Activated CD4-positive, alpha-beta T cell treated with anti-CD3 and anti-CD28 coated beads for 36 hours (primary cell): ENCODE measurements at regions of chr4 and their contacts with region 1.

Region 1: GRCh38 chr4:181528570-181529184 is 714.5 kb upstream of the TENM3 start:
- DNase-seq: peak; percentile 53
- ATAC-seq: no peak
- H3K4me3 Mint-ChIP-seq: no peak overlapping the region
- H3K27ac Mint-ChIP-seq: no peak overlapping the region
- H3K4me1 Mint-ChIP-seq: no peaks in the 10 kb centered on the region
- H3K27me3 Mint-ChIP-seq: no peaks in the 10 kb centered on the region

Region 2: GRCh38 chr4:180828440-180829018 is 700.1 kb before region 1 on chr4:
- CTCF ChIA-PET with region 1: no interaction called
- POLR2A ChIA-PET with region 1: no interaction called
- intact Hi-C with region 1: loop called in 1 of 2 experiments (anchors 10 kb)
- DNase-seq: peak; percentile 14
- ATAC-seq: no peak
- H3K4me3 Mint-ChIP-seq: no peak overlapping the region
- H3K27ac Mint-ChIP-seq: no peak overlapping the region
- H3K4me1 Mint-ChIP-seq: no peaks in the 10 kb centered on the region
- H3K27me3 Mint-ChIP-seq: no peaks in the 10 kb centered on the region

Region 3: GRCh38 chr4:181143250-181143854 is 385.3 kb before region 1 on chr4:
- CTCF ChIA-PET with region 1: interaction called, 6 read pairs
- POLR2A ChIA-PET with region 1: no interaction called
- intact Hi-C with region 1: loop called (anchors 1 kb)
- DNase-seq: peak; percentile 84
- ATAC-seq: peak; percentile 60
- H3K4me3 Mint-ChIP-seq: no peak overlapping the region
- H3K27ac Mint-ChIP-seq: no peak overlapping the region
- H3K4me1 Mint-ChIP-seq: no peaks in the 10 kb centered on the region
- H3K27me3 Mint-ChIP-seq: peaks cover 5% of the 10 kb centered on the region

Region 4: GRCh38 chr4:181301735-181302710 is 226.7 kb before region 1 on chr4:
- CTCF ChIA-PET with region 1: interaction called, 3 read pairs
- POLR2A ChIA-PET with region 1: no interaction called
- intact Hi-C with region 1: loop called (anchors 1 to 5 kb)
- DNase-seq: peak; percentile 59
- ATAC-seq: no peak
- H3K4me3 Mint-ChIP-seq: no peak overlapping the region
- H3K27ac Mint-ChIP-seq: no peak overlapping the region
- H3K4me1 Mint-ChIP-seq: no peaks in the 10 kb centered on the region
- H3K27me3 Mint-ChIP-seq: no peaks in the 10 kb centered on the region

Region 5: DNA sequence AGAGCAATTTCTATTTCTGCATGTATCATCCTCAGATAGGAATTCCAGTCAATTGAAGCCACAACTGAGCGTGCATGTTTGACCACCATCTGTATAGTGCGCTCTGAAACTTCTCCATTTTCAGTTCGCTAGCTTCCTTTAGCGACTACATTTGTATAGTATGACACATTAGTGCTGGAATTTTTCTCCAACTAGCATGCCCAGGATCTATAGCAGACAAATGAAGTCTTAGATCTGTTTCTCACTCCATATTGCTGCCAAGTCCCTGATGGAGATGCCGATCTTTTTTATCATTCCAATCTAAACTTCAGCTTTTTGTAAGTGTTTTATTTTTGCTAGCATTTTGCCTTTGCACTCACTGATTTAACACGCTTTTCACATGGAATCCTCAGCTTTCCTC is 60.2 kb before region 1 on chr4:
- CTCF ChIA-PET with region 1: no interaction called
- POLR2A ChIA-PET with region 1: no interaction called
- intact Hi-C with region 1: no loop called
- DNase-seq: no peak
- ATAC-seq: no peak
- H3K4me3 Mint-ChIP-seq: no peak overlapping the region
- H3K27ac Mint-ChIP-seq: no peak overlapping the region
- H3K4me1 Mint-ChIP-seq: no peaks in the 10 kb centered on the region
- H3K27me3 Mint-ChIP-seq: no peaks in the 10 kb centered on the region